ENCODE measurements at regions of chr1 and their contacts with region 1.

Region 1: GRCh38 chr1:180482425-180483275 is 19.7 kb downstream of the ACBD6 start:
- DNase-seq: peak; percentile 45
- H3K4me3 ChIP-seq: no peak overlapping the region
- CTCF ChIP-seq: peak; percentile 58

Region 2: GRCh38 chr1:180178511-180179161 is 304.0 kb before region 1 on chr1:
- in situ Hi-C with region 1: loop called (anchors 25 kb)
- DNase-seq: peak; percentile 39
- H3K4me3 ChIP-seq: no peak overlapping the region
- CTCF ChIP-seq: peak; percentile 99

Measured in astrocyte of the cerebellum (primary cell).